ENCODE measurements at regions of chr11 and their contacts with region 1.

Region 1: DNA sequence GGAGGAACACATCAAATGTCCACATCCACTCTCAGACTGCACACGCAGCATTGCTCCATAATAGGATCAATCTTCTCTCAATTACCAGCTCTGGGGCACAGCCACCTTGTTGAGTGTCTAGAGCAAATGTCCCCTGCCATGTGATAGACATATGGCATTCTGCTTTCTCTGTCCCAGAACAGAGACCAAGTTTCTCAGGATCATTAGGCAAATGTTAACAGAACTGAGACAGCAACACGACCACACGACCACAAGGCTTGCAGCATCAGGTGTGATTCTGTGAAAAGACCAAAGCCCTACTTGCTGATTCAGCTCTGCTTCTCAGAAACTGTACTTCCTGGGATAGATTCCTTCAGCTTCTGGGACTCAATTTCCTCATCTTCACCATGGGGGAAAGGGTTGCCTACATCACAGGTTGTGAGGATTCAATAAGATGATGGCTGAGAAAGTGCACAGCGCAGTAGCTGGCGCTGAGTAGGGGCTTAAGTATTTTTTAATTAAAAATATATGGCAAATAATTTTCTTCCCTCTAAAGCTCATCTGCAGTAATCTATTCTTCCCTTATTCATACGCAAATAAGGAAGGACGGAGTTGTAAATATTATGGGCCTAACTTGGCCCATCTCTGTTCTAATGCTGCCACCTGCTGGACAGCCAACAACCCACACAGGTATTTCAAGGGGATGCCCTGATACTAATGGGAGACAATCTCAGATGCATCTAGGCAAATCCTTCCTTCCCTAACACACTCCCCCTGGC is 54.3 kb upstream of the USP47 start:
- DNase-seq: peak; percentile 57 to 76
- ATAC-seq: peak; percentile 78 to 97 (median 89)
- H3K4me3 ChIP-seq: no peak overlapping the region
- H3K27ac ChIP-seq: no peak overlapping the region
- H3K4me1 ChIP-seq: peaks cover 0 to 8% (median 0%) of the 10 kb centered on the region in 9 donors
- H3K27me3 ChIP-seq: no peaks in the 10 kb centered on the region
- CTCF ChIP-seq: peak; percentile 77 to 97 (median 88)

Region 2: DNA sequence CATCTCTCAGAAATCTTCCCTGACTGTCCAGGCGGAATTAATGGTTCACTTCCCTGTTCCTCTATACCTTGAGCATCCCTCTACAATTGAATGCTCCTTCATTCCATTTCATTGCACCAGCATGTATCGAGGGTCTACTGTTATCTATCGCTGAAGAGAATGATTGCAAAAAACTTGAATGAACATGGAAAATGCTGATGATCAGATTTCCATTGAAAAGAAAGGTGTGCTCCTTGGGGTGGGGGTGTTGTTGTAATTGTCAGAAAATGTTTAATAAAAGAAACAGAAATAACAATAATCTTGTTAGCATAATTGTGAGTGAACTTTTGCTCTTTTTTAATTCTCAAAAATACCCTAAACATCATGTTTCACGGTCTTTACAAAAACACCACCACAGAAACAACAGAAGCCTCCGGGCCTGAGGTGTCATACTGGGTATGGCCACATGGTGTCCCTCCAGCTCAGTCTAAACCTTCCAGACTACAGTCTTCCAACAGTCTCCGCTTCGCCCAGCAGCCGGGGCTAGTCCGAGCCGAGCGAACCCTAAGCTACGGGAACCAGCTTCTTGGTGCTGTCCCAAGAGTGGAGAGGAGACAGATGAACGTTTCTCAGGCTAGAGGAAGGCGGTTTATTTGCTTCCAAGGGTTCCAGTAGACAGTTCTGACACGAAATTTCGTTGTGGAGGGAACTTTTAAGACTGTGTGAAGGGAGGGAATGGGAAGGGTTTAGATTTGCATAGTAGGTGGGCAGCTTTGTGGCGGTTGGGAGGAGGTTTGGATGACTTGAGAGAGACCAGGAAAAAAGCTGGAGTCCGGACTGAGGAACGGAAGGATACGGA is 853.8 kb before region 1 on chr11:
- intact Hi-C with region 1: loop called in 6 of 10 experiments (anchors 2 to 10 kb)
- DNase-seq: peak; percentile 87 to 91
- ATAC-seq: peak; percentile 78 to 93 (median 89)
- H3K4me3 ChIP-seq: peak overlapping the region; percentile 7 to 56 (median 52)
- H3K27ac ChIP-seq: peak overlapping the region; percentile 28 to 89 (median 72)
- H3K4me1 ChIP-seq: peaks cover 0 to 33% (median 17%) of the 10 kb centered on the region in 9 donors
- H3K27me3 ChIP-seq: peaks cover 0 to 49% (median 0%) of the 10 kb centered on the region in 7 donors
- CTCF ChIP-seq: peak; percentile 90 to 99 (median 95)

Region 3: GRCh38 chr11:11036848-11037732 is 750.4 kb before region 1 on chr11:
- intact Hi-C with region 1: loop called in 9 of 10 experiments (anchors 2 to 5 kb)
- DNase-seq: peak in 1 of 2 donors; percentile 57
- ATAC-seq: peak in 7 of 8 donors; percentile 74 to 88 (median 85)
- H3K4me3 ChIP-seq: no peak overlapping the region
- H3K27ac ChIP-seq: no peak overlapping the region
- H3K4me1 ChIP-seq: peaks cover 0 to 8% (median 0%) of the 10 kb centered on the region in 9 donors
- H3K27me3 ChIP-seq: no peaks in the 10 kb centered on the region
- CTCF ChIP-seq: peak; percentile 66 to 87 (median 82)

Region 4: GRCh38 chr11:11349870-11350337 is 437.6 kb before region 1 on chr11:
- intact Hi-C with region 1: loop called in 1 of 10 experiments (anchors 10 kb)
- DNase-seq: peak in 1 of 2 donors; percentile 47
- ATAC-seq: peak in 7 of 8 donors; percentile 46 to 73 (median 57)
- H3K4me3 ChIP-seq: no peak overlapping the region
- H3K27ac ChIP-seq: peak overlapping the region in 2 of 10 donors; percentile 30 to 35
- H3K4me1 ChIP-seq: peaks cover 11 to 48% (median 39%) of the 10 kb centered on the region in 9 donors
- H3K27me3 ChIP-seq: no peaks in the 10 kb centered on the region
- CTCF ChIP-seq: no peak

Region 5: GRCh38 chr11:11416502-11416901 is 371.0 kb before region 1 on chr11:
- intact Hi-C with region 1: loop called in 1 of 10 experiments (anchors 10 kb)
- DNase-seq: no peak
- ATAC-seq: peak in 5 of 8 donors; percentile 10 to 61 (median 41)
- H3K4me3 ChIP-seq: no peak overlapping the region
- H3K27ac ChIP-seq: no peak overlapping the region
- H3K4me1 ChIP-seq: peaks cover 6 to 50% (median 32%) of the 10 kb centered on the region in 9 donors
- H3K27me3 ChIP-seq: peaks cover 0 to 50% (median 0%) of the 10 kb centered on the region in 7 donors
- CTCF ChIP-seq: no peak

Region 6: DNA sequence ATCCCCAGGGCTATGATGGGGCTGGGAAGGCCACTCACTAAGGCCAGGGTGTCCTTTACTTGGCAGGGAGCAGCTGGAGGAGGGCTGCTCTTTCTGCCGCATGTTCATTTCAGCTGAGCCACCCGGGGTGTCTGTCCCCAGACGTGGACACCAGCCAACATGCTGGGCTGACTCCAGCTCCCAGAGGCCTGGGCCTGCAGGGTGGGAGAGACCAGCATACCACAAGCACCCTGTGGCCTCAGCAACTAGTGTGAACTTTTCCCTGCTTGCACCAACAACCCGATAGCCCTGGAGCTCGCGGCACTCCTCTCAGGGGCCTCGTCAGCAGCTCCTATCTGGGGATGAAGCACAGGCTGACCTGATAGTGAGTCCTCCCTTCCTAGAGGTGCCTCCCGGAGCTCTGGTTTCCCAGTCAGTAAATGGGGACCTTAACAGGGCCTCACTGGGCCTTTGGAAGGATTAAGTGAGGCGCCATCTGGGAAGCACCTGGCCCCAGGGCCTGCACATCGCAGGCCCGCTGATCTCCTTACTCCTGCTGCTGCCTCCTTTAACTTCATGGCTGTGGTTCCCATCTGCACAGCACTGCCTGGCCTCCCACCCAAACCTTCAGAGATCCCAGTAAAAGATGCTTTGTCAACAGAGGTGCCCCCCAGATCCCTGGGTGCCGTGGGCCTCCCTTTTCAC is 249.1 kb before region 1 on chr11:
- intact Hi-C with region 1: no loop called
- DNase-seq: peak; percentile 77 to 79
- ATAC-seq: peak; percentile 57 to 88 (median 78)
- H3K4me3 ChIP-seq: no peak overlapping the region
- H3K27ac ChIP-seq: peak overlapping the region; percentile 77 to 95 (median 84)
- H3K4me1 ChIP-seq: peaks cover 30 to 100% (median 73%) of the 10 kb centered on the region in 9 donors
- H3K27me3 ChIP-seq: no peaks in the 10 kb centered on the region
- CTCF ChIP-seq: no peak

Region 7: GRCh38 chr11:11667056-11667455 is 120.4 kb before region 1 on chr11:
- intact Hi-C with region 1: no loop called
- DNase-seq: no peak
- ATAC-seq: no peak
- H3K4me3 ChIP-seq: no peak overlapping the region
- H3K27ac ChIP-seq: no peak overlapping the region
- H3K4me1 ChIP-seq: peaks cover 0 to 9% (median 3%) of the 10 kb centered on the region in 9 donors
- H3K27me3 ChIP-seq: peaks cover 0 to 10% (median 0%) of the 10 kb centered on the region in 7 donors
- CTCF ChIP-seq: no peak

Region 8: DNA sequence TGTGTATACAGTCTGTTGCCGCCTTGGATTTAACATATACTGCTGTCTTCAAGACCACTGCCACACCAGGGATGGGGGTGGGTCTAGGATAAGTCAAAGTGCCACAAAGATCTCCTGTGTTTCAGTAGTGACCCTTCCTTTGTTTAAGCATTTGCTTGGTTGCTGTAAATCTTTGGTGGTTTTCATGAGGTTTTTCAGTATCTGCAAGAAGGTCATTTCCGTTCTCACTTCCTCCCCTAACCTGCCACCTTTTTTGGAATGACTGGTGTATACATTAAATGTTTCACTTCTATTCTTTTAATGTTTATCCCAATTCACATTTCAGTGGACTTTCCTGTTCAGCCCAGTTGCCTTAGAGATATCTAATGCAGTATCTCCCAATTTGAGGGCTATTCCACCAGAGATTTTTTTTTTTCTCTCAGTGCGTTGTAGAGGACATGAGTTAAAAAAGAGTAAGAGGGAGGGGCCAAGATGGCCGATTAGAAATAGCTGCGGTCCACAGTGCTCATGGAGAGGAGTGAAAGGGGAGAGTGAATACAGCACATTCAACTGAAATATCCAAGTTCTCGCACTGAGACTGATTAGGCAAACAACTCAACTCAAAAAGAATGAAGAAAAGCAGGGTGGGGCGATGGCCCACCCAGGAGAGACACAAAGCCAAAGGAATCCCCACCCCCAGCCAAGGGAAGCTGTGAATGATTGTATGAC is 97.4 kb after region 1 on chr11:
- intact Hi-C with region 1: no loop called
- DNase-seq: no peak
- ATAC-seq: no peak
- H3K4me3 ChIP-seq: no peak overlapping the region
- H3K27ac ChIP-seq: no peak overlapping the region
- H3K4me1 ChIP-seq: peaks cover 0 to 34% (median 19%) of the 10 kb centered on the region in 9 donors
- H3K27me3 ChIP-seq: no peaks in the 10 kb centered on the region
- CTCF ChIP-seq: no peak

Measured in heart right ventricle (tissue), 16 donors.